Activated naive CD4-positive, alpha-beta T cell treated with anti-CD3 and anti-CD28 coated beads for 36 hours (primary cell): ENCODE measurements at regions of chr7 and their contacts with region 1.

Region 1: GRCh38 chr7:17022920-17023319 is 141.1 kb upstream of the AGR3 start:
- DNase-seq: peak; percentile 49
- H3K4me3 Mint-ChIP-seq: no peak overlapping the region
- H3K27ac Mint-ChIP-seq: no peak overlapping the region
- H3K4me1 Mint-ChIP-seq: peaks cover 10% of the 10 kb centered on the region
- H3K27me3 Mint-ChIP-seq: peaks cover 8% of the 10 kb centered on the region

Region 2: DNA sequence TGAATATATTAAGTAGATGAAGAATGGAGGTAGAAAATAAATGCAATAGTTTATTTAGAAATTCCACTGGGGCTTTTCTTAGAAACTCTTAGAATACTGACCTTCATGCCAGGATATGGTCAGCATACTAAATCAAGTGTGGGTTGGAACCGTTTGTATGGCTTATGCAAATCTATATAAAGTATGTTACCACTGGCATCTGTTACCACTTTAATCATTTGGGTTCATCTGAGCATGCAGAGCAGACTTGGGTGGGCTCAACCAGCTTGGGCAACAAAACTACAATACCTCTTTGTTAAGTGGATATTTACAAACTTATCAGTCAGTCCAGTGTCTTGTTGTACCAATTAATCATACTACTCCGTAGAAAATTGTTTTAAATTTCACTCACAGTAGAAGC is 727.4 kb before region 1 on chr7:
- CTCF ChIA-PET with region 1: no interaction called
- intact Hi-C with region 1: no loop called
- DNase-seq: no peak
- H3K4me3 Mint-ChIP-seq: no peak overlapping the region
- H3K27ac Mint-ChIP-seq: no peak overlapping the region
- H3K4me1 Mint-ChIP-seq: no peaks in the 10 kb centered on the region
- H3K27me3 Mint-ChIP-seq: no peaks in the 10 kb centered on the region

Region 3: GRCh38 chr7:16999541-17000267 is 23.2 kb before region 1 on chr7:
- CTCF ChIA-PET with region 1: no interaction called
- intact Hi-C with region 1: loop called (anchors 1 kb)
- DNase-seq: peak; percentile 18
- H3K4me3 Mint-ChIP-seq: no peak overlapping the region
- H3K27ac Mint-ChIP-seq: no peak overlapping the region
- H3K4me1 Mint-ChIP-seq: peaks cover 7% of the 10 kb centered on the region
- H3K27me3 Mint-ChIP-seq: peaks cover 2% of the 10 kb centered on the region

Region 4: DNA sequence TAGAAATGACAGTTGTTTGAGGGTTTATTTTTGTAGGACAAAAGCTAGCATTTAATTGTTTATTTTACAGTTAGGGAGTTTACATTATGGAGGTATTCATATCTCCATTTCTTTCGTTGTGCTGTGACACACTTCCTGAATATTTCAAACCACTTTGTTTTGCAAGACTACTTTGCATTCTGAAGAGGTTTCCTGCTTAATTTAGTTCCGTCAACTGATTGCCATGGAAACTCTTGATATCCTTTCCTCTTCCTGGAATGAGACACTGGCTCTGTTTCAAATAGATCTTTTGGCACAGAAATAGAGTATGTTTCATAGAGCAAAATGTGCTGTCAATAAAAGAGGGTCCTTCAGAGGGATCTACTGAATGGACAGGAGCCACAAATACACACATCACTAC is 18.4 kb after region 1 on chr7:
- CTCF ChIA-PET with region 1: interaction called, 3 read pairs
- intact Hi-C with region 1: loop called (anchors 1 kb)
- DNase-seq: no peak
- H3K4me3 Mint-ChIP-seq: no peak overlapping the region
- H3K27ac Mint-ChIP-seq: no peak overlapping the region
- H3K4me1 Mint-ChIP-seq: peaks cover 15% of the 10 kb centered on the region
- H3K27me3 Mint-ChIP-seq: peaks cover 7% of the 10 kb centered on the region

Region 5: DNA sequence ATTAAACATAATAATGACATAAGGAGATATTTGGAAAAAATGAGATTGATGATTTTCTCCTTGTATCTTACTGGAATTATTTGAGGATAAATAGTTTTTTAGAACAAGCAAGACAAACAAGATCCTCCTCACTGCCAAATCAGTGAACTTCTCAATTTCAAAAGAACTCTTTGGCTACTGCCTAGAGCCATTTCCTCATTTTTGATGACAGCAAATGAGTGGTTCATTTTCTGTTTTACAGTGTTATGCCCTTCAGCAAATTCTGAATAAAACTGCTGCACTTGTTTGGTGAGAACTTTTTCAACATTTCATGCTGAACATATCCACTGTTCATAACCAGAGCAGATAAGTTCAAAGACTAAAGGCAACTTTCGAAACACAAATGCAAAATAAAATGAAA is 233.0 kb after region 1 on chr7:
- CTCF ChIA-PET with region 1: no interaction called
- intact Hi-C with region 1: loop called (anchors 1 kb)
- DNase-seq: no peak
- H3K4me3 Mint-ChIP-seq: no peak overlapping the region
- H3K27ac Mint-ChIP-seq: no peak overlapping the region
- H3K4me1 Mint-ChIP-seq: peaks cover 6% of the 10 kb centered on the region
- H3K27me3 Mint-ChIP-seq: no peaks in the 10 kb centered on the region